ENCODE measurements at regions of chr3 and their contacts with region 1.

Region 1: GRCh38 chr3:118884748-118885206 is 149.9 kb downstream of the IGSF11 start:
- DNase-seq: peak; percentile 47 to 64
- H3K4me3 ChIP-seq: no peak overlapping the region
- H3K27ac ChIP-seq: no peak overlapping the region
- H3K4me1 ChIP-seq: no peaks in the 10 kb centered on the region
- H3K27me3 ChIP-seq: peaks cover 0 to 14% of the 10 kb centered on the region in 2 donors
- CTCF ChIP-seq: peak in 2 of 3 donors; percentile 54 to 58
- POLR2A ChIP-seq: no peak

Region 2: DNA sequence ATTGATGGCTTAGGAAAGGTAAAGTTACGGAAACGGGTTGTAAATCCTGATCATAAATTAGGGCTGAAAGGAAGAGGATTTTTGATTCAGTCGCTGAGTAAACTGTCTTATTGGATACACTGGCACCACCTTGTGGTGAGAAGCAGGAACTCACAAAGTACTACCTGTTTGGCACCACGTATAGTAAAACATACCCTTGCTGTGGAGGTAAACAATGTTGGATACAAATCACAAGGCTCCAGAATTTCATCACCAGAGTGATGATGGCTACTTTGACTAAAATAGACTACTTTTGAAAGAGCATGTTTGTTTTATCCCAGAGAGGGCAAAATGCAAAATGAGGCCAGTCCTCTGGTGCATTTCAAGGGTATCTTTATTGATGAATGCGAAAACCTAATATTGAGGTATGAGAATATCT is 67.0 kb before region 1 on chr3:
- intact Hi-C with region 1: no loop called
- DNase-seq: no peak
- H3K4me3 ChIP-seq: no peak overlapping the region
- H3K27ac ChIP-seq: no peak overlapping the region
- H3K4me1 ChIP-seq: no peaks in the 10 kb centered on the region
- H3K27me3 ChIP-seq: no peaks in the 10 kb centered on the region
- CTCF ChIP-seq: peak in 2 of 3 donors; percentile 52 to 66
- POLR2A ChIP-seq: no peak

Region 3: DNA sequence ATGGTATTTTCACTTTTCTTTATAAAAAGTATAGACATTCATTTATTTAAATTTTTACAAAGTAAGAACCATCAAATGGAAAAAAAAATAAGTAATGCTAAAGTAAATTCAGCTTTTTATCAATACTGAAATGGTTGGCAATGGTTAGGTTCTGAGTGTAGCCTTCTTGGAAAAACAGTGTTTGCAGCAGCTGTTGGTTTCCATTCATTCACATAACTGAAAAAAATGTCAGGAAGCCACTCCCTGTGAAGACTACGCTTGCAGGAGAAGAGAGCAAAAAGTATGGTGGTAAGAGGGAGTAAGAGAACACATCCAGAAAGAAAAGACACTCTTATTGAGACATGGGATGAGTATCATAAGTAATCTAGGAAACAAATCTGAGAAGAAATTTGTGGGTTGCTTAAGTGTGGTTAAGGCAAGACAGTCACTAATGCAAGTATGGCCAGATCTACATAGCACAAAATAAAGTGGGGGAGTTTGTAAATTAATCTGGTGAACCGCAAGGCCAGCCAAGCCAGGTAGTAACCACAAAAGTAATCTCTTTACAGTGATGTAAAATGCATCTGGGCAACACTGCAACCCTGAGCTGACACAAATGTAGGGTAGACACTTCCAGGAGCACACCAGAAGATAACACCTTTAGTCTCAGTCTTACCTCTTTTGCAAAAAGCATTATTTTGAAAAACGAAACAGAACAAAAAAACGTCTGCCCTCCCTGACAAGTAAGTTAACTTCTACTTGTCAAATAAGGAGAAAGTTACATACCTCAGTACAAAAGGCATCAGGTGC is 16.2 kb after region 1 on chr3:
- intact Hi-C with region 1: loop called (anchors 1 kb)
- DNase-seq: no peak
- H3K4me3 ChIP-seq: no peak overlapping the region
- H3K27ac ChIP-seq: no peak overlapping the region
- H3K4me1 ChIP-seq: no peaks in the 10 kb centered on the region
- H3K27me3 ChIP-seq: no peaks in the 10 kb centered on the region
- CTCF ChIP-seq: no peak
- POLR2A ChIP-seq: no peak

Region 4: GRCh38 chr3:119098619-119099222 is 213.9 kb after region 1 on chr3:
- intact Hi-C with region 1: loop called (anchors 10 kb)
- DNase-seq: no peak
- H3K4me3 ChIP-seq: no peak overlapping the region
- H3K27ac ChIP-seq: no peak overlapping the region
- H3K4me1 ChIP-seq: no peaks in the 10 kb centered on the region
- H3K27me3 ChIP-seq: no peaks in the 10 kb centered on the region
- CTCF ChIP-seq: peak in 2 of 3 donors; percentile 36 to 52
- POLR2A ChIP-seq: no peak